ENCODE measurements at regions of chr1 and their contacts with region 1.

Region 1: DNA sequence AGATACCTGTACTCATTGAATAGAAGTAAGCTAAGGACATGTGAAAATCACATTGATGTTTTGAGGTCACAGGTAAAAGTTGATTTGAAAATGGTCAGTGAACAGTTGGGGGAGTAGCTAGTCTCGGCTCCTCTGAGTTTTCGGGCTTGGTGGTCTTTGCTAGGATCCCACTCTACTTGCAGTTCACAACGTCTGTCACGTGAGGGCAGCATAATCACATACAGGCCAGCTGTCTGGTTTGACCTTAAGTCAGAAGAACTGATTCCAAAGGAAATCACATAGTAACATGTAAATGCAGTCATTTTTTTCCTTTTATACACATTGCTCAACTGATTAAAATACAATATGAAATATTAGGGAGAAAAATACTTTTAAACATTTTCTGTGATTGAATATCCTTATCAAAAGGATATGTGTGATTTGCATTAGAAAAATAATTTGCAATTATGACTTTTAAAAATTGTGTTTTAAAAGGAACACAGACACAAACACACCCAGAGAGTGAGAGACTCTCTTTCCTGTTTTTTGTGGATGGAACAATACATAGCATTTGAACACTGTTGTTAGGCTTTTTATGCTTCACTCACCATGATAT is 21.8 kb upstream of the PDC start:
- DNase-seq: peak; percentile 80
- H3K4me3 ChIP-seq: no peak overlapping the region
- H3K27ac ChIP-seq: no peak overlapping the region
- H3K4me1 ChIP-seq: peaks cover 16% of the 10 kb centered on the region
- H3K27me3 ChIP-seq: no peaks in the 10 kb centered on the region

Region 2: DNA sequence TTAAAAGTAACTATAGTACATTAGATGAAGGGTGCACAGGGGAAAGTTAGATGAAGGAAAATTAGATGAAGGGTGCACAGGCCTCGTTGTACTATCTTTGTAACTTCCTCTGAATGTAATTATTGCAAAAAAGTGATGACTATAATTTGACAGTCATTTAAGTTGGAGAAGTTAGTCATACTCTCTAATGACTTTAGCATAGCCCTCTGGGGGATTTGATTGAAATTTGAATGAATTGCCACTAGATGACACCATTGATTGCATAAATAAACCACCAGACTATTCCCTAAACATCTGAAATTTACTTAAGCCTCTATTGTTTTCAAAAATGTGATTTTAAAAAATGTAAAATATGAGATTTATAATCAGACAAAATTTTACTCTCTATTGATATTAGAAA is 210.3 kb before region 1 on chr1:
- in situ Hi-C with region 1: no loop called
- DNase-seq: peak; percentile 22
- H3K4me3 ChIP-seq: no peak overlapping the region
- H3K27ac ChIP-seq: no peak overlapping the region
- H3K4me1 ChIP-seq: no peaks in the 10 kb centered on the region
- H3K27me3 ChIP-seq: no peaks in the 10 kb centered on the region

Region 3: GRCh38 chr1:186605762-186606350 is 123.1 kb after region 1 on chr1:
- in situ Hi-C with region 1: loop called (anchors 10 kb)
- DNase-seq: peak; percentile 80
- H3K4me3 ChIP-seq: no peak overlapping the region
- H3K27ac ChIP-seq: no peak overlapping the region
- H3K4me1 ChIP-seq: no peaks in the 10 kb centered on the region
- H3K27me3 ChIP-seq: no peaks in the 10 kb centered on the region

Region 4: DNA sequence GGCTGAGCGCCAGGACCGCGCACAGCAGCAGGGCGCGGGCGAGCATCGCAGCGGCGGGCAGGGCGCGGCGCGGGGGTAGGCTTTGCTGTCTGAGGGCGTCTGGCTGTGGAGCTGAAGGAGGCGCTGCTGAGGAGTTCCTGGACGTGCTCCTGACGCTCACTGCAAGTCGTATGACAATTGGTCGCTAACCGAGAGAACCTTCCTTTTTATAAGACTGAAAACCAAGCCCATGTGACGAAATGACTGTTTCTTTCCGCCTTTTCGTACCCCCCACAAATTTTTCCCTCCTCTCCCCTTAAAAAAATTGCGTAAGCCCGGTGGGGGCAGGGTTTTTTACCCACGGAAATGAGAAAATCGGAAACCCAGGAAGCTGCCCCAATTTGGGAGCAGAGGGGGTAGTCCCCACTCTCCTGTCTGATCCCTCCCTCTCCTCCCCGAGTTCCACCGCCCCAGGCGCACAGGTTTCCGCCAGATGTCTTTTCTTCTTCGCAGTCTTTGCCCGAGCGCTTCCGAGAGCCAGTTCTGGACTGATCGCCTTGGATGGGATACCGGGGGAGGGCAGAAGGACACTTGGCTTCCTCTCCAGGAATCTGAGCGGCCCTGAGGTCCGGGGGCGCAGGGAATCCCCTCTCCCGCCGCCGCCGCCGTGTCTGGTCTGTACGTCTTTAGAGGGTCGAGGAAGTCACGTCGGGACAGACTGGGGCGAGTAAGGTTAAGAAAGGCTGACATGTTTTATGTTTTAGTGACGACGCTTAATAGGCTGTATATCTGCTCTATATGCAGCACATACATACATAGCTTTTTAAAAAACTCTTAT is 197.7 kb after region 1 on chr1 and contains the start of gene PTGS2:
- in situ Hi-C with region 1: loop called (anchors 10 kb)
- DNase-seq: peak; percentile 97
- H3K4me3 ChIP-seq: peak within 1 kb of the TSS; percentile 91
- H3K27ac ChIP-seq: peak within 1 kb of the TSS; percentile 90
- H3K4me1 ChIP-seq: peaks cover 16% of the 10 kb centered on the region
- H3K27me3 ChIP-seq: no peaks in the 10 kb centered on the region
- total RNA-seq, gene PTGS2: 67.9 and 69.3 TPM in 2 replicates

Region 5: DNA sequence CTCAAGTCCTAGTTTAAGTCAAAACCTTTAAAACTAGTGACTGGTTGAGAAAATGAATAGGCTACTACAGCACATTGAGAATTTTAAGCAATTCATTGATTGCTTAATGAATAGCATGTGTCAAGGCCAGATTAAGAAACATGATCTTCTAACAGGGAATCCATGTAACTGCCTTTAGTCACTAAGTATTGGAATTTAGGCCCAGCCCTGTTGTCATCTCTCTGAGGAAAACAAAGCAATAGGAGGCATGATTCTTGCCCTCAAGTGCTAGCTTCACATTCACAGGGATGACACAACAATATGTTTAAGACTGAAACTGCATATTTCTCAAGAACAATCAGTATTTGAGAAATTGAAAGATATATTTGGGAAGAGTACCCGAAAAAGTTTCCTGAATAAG is 267.5 kb after region 1 on chr1:
- in situ Hi-C with region 1: no loop called
- DNase-seq: peak; percentile 73
- H3K4me3 ChIP-seq: no peak overlapping the region
- H3K27ac ChIP-seq: peak overlapping the region; percentile 32; the same call in 1 of the 2 replicates
- H3K4me1 ChIP-seq: no peaks in the 10 kb centered on the region
- H3K27me3 ChIP-seq: no peaks in the 10 kb centered on the region

Measured in GM23248 (cell line).